ENCODE measurements at regions of chr5 and their contacts with region 1.

Region 1: DNA sequence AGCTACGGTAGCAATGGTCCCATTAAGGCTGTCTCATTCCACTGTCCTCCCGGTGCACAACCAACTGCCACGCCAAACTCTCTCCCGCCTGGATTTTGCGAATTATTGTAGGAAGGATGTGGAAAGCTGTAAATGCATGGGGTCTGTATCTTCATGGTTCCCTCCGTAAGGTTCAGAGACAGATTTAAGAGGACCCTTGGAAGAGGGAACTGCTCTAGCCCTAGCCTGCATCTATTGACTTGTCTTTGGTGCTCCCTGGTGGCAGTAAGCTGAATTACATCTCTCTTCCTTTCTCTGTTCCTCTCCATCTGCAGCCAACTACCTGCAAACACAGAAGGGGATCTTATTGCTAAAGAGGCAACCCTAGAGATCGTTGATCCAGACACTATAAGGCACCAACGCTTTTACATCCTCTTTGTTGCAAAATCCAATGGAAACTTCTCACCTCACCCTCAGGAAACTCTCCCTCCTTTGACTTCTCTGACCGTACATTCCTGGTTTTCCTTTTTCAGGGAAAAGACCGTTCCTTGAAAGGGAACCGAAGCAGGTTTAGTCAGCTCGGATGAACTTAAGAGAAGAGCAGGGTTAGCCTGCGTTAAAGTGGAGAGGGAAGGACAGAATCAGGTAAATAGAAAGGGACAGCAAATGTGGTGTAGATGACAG is 11.9 kb downstream of the CAPSL start:
- DNase-seq: peak in 1 of 2 experiments; percentile 58
- H3K4me3 ChIP-seq: no peak overlapping the region
- H3K27ac ChIP-seq: no peak overlapping the region
- H3K4me1 ChIP-seq: no peaks in the 10 kb centered on the region
- H3K27me3 ChIP-seq: peaks cover 54% of the 10 kb centered on the region
- CTCF ChIP-seq: peak; percentile 99

Region 2: GRCh38 chr5:34474573-34475021 is 1451.9 kb before region 1 on chr5:
- CTCF ChIA-PET with region 1: no interaction called
- POLR2A ChIA-PET with region 1: no interaction called
- intact Hi-C with region 1: loop called (anchors 1 kb)
- DNase-seq: peak; percentile 51 to 59
- H3K4me3 ChIP-seq: no peak overlapping the region
- H3K27ac ChIP-seq: no peak overlapping the region
- H3K4me1 ChIP-seq: no peaks in the 10 kb centered on the region
- H3K27me3 ChIP-seq: no peaks in the 10 kb centered on the region
- CTCF ChIP-seq: peak; percentile 100

Region 3: GRCh38 chr5:35089334-35090314 is 836.9 kb before region 1 on chr5:
- CTCF ChIA-PET with region 1: interaction called, 12 read pairs
- POLR2A ChIA-PET with region 1: interaction called, 4 read pairs
- intact Hi-C with region 1: loop called (anchors 1 kb)
- DNase-seq: peak; percentile 44 to 46
- H3K4me3 ChIP-seq: no peak overlapping the region
- H3K27ac ChIP-seq: no peak overlapping the region
- H3K4me1 ChIP-seq: no peaks in the 10 kb centered on the region
- H3K27me3 ChIP-seq: peaks cover 72% of the 10 kb centered on the region
- CTCF ChIP-seq: peak; percentile 80

Region 4: DNA sequence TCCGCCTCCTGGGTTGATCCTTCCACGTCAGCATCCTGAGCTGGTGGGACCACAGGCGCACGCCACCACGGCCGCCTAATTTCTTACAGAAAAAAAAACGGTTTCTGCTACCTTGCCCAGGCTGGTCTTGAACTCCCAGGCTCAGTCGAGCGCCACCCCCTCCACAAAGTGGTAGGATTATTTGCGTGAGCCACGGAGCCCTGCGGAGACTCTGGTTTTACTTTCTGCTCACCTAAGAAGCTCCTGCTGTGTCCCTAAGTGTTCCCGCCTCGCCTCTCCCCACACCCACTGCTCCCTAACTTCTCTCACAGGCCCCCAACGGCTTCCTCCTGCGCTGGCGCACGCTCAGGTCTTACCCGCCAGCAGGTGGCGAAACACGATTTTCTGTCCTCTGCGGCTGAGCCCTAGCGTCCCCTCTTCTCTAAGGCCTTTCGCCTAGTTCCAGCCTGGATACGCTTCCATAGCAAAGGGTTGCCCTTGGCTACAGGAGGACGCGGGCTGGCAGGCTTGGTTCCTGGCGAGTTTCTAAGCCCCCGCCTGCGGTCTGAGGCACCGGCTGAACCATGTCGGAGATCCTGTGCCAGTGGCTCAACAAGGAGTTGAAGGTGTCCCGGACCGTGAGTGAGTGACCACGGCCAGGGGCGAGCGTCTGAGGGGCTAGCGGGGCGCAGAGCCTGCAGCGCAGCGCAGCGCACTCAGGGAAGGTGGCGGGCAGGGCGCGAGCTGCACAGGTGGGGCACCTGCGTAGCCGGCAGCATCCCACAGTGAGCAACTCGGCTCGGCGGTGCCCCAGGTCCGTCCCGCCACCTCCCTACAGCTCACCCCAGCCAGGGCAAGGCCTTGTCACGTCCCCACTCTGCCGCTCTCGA is 308.9 kb before region 1 on chr5 and contains the start of gene SPEF2:
- CTCF ChIA-PET with region 1: interaction called, 3 read pairs
- POLR2A ChIA-PET with region 1: no interaction called
- intact Hi-C with region 1: loop called (anchors 1 kb)
- DNase-seq: peak; percentile 89 to 93
- H3K4me3 ChIP-seq: peak within 1 kb of the TSS; percentile 79
- H3K27ac ChIP-seq: no peak within 1 kb of the TSS
- H3K4me1 ChIP-seq: peaks cover 9% of the 10 kb centered on the region
- H3K27me3 ChIP-seq: no peaks in the 10 kb centered on the region
- CTCF ChIP-seq: peak; percentile 85
- total RNA-seq, gene SPEF2: 7.5 and 10.6 TPM in 2 replicates

Region 5: GRCh38 chr5:35777358-35778087 is 149.0 kb before region 1 on chr5:
- CTCF ChIA-PET with region 1: no interaction called
- POLR2A ChIA-PET with region 1: no interaction called
- intact Hi-C with region 1: loop called (anchors 1 kb)
- DNase-seq: peak; percentile 44 to 47
- H3K4me3 ChIP-seq: no peak overlapping the region
- H3K27ac ChIP-seq: no peak overlapping the region
- H3K4me1 ChIP-seq: no peaks in the 10 kb centered on the region
- H3K27me3 ChIP-seq: no peaks in the 10 kb centered on the region
- CTCF ChIP-seq: peak; percentile 87

Region 6: DNA sequence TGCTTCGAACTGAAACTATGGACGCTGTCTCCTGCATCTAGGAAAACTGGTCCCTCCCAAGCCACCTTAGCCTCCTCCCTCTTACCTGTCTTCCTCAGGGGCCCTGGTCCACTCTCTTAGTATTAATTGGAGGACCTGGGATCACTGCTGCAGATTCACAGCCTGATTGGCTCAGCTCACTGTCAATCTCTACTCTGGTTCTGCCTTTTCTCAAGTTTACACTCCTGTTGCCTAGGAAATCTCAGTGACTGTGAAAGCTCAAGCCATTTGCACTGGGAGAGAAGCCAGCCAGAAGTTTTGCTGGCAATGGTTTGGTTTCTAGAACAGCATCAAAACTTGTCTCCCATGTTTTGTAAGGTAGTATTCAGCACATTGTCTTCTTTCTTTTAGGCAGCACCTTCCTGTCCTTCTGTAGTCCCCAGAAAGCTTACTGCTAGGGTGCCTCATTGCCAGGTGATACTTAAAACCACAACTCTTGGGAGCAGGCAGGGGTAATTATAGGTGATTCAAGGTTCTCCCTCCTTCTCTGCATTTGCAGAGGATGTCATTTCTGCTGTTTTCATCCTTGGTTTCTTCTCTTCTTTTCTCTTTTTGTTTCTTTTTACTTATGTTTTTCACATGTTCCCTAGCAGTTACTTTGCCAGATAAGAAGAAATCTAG is 12.2 kb after region 1 on chr5 and contains the start of gene CAPSL:
- CTCF ChIA-PET with region 1: no interaction called
- POLR2A ChIA-PET with region 1: no interaction called
- intact Hi-C with region 1: no loop called
- DNase-seq: no peak
- H3K4me3 ChIP-seq: no peak within 1 kb of the TSS
- H3K27ac ChIP-seq: no peak within 1 kb of the TSS
- H3K4me1 ChIP-seq: no peaks in the 10 kb centered on the region
- H3K27me3 ChIP-seq: peaks cover 56% of the 10 kb centered on the region
- CTCF ChIP-seq: no peak
- total RNA-seq, gene CAPSL: not detected in 2 replicates

Region 7: GRCh38 chr5:36029914-36030313 is 103.4 kb after region 1 on chr5:
- CTCF ChIA-PET with region 1: no interaction called
- POLR2A ChIA-PET with region 1: no interaction called
- intact Hi-C with region 1: no loop called
- DNase-seq: no peak
- H3K4me3 ChIP-seq: no peak overlapping the region
- H3K27ac ChIP-seq: no peak overlapping the region
- H3K4me1 ChIP-seq: no peaks in the 10 kb centered on the region
- H3K27me3 ChIP-seq: peaks cover 26% of the 10 kb centered on the region
- CTCF ChIP-seq: no peak

Measured in PC-9 (cell line).